ENCODE measurements at regions of chr18 and their contacts with region 1.

Region 1: GRCh38 chr18:51029694-51030536 is at the start of gene SMAD4:
- DNase-seq: peak; percentile 97 to 99 (median 98)
- ATAC-seq: peak; percentile 78
- H3K4me3 ChIP-seq: peak within 1 kb of the TSS; percentile 77
- H3K4me3 Mint-ChIP-seq: peak within 1 kb of the TSS; percentile 100
- H3K27ac ChIP-seq: peak within 1 kb of the TSS; percentile 79 to 82
- H3K27ac Mint-ChIP-seq: peak within 1 kb of the TSS; percentile 100
- H3K4me1 ChIP-seq: peaks cover 35% of the 10 kb centered on the region
- H3K4me1 Mint-ChIP-seq: peaks cover 63% of the 10 kb centered on the region
- H3K27me3 ChIP-seq: no peaks in the 10 kb centered on the region
- H3K27me3 Mint-ChIP-seq: no peaks in the 10 kb centered on the region
- CTCF ChIP-seq: no peak
- total RNA-seq, gene SMAD4: 82.0 to 82.9 TPM

Region 2: GRCh38 chr18:50287441-50288347 is 742.2 kb before region 1 on chr18 and contains the start of gene CXXC1:
- CTCF ChIA-PET with region 1: no interaction called
- POLR2A ChIA-PET with region 1: no interaction called
- intact Hi-C with region 1: loop called (anchors 5 to 10 kb)
- DNase-seq: peak; percentile 96 to 99 (median 97)
- ATAC-seq: peak; percentile 85
- H3K4me3 ChIP-seq: peak within 1 kb of the TSS; percentile 85
- H3K4me3 Mint-ChIP-seq: peak within 1 kb of the TSS; percentile 96
- H3K27ac ChIP-seq: peak within 1 kb of the TSS; percentile 72 to 93
- H3K27ac Mint-ChIP-seq: peak within 1 kb of the TSS; percentile 98
- H3K4me1 ChIP-seq: peaks cover 24% of the 10 kb centered on the region
- H3K4me1 Mint-ChIP-seq: peaks cover 27% of the 10 kb centered on the region
- H3K27me3 ChIP-seq: no peaks in the 10 kb centered on the region
- H3K27me3 Mint-ChIP-seq: no peaks in the 10 kb centered on the region
- CTCF ChIP-seq: peak; percentile 61
- total RNA-seq, gene CXXC1: 120 to 128 TPM

Region 3: DNA sequence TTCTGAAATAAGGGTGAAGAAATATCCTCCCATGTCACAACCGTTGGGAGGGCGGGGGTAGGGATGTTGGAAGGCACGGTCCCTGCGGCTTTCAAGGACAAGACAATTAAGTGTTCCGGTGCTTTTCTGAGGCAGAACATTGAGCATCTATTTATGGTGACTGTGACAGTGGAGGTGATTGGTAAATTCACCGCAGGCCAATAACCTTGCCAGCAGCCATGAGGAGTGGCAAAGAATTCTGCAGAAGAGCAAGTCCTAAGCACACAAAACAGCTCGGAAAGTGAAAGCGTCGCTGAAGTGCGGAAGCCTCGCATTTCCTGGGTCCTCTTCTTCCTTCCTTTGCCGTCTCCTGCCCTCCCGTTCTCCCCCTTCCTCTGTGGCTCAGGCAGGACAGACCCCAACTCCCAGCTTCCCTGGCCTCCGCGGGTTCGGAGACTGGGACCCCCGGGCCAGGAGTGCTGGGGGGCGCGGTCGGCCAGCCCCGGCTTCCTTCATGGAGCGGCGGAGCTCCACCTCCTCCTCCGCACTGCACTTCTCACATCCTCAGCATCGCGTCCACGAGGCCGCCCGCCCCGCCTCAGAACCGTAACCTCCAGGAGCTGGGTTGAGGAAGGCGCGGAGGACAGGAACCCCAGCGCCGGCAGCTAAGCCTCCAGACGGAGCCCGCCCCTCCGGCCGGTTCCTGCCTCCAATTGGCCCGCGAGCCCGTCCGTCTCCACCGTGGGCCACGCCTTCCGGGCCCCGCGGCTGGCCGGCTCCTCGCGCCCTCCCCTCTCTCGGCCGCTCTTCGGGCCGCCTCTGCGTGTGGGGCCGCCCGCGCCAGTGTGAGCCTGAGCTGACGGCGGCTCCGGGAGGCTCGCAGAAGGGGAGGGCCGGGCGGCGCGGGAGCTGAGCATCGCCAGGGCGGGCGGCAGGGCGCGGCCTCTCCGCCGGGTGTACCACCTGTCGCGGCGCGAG is 151.3 kb before region 1 on chr18 and contains the start of gene ME2:
- CTCF ChIA-PET with region 1: no interaction called
- POLR2A ChIA-PET with region 1: interaction called, 107 read pairs
- intact Hi-C with region 1: loop called (anchors 2 to 5 kb)
- DNase-seq: peak; percentile 77 to 94 (median 88)
- ATAC-seq: peak; percentile 90
- H3K4me3 ChIP-seq: peak within 1 kb of the TSS; percentile 93
- H3K4me3 Mint-ChIP-seq: peak within 1 kb of the TSS; percentile 98
- H3K27ac ChIP-seq: peak within 1 kb of the TSS; percentile 95 to 97
- H3K27ac Mint-ChIP-seq: peak within 1 kb of the TSS; percentile 97
- H3K4me1 ChIP-seq: peaks cover 32% of the 10 kb centered on the region
- H3K4me1 Mint-ChIP-seq: peaks cover 28% of the 10 kb centered on the region
- H3K27me3 ChIP-seq: no peaks in the 10 kb centered on the region
- H3K27me3 Mint-ChIP-seq: peaks cover 6% of the 10 kb centered on the region
- CTCF ChIP-seq: no peak
- total RNA-seq, gene ME2: 15.6 to 16.1 TPM

Region 4: DNA sequence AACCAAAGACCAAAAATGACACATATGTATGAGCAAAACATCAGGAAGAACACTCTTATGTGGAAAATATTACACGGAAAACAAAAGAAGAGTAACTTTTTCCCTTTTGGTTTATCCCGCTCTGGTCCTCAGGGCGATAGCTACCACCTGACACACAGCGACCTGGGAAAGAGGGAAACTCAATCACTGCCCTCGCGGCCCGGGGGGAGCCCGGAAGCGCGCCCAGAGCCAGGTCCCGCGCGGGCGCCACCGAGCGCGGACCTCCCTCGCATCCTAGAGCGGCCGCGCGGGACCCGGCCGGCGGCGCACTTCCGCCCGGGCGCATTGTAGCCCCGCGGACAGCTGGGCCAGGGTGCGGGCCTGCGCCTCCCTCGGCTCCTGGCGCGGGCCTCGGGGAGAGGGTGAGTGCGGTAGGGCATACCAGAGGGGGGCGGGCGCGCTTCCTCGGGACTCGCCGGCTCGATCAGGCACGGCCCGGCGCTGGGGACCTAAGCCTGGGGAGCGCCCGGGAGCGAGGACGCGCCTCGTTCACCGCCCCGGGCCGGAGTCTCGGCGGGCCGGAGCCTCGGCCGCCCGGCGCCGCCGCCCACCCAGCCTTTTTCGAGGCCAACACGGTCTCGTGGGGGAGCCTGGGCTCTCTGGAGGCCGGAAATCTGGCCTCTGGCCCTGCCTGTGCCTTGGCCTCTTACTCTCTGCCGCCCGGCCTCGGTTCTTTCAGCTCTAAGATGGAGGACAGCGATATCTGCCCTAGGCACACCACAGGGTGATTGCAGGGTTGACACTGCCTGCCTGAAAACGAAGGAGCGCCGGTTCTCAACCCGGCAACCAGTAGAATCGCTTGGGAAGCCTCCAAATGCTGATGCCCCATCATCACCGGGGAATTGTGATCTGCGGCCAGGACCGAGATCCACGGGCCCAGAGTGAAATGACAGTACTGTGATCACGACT is 61.9 kb before region 1 on chr18 and contains the start of gene ELAC1:
- CTCF ChIA-PET with region 1: interaction called, 3 read pairs
- POLR2A ChIA-PET with region 1: interaction called, 79 read pairs
- intact Hi-C with region 1: loop called in 1 of 2 experiments (anchors 1 kb)
- DNase-seq: peak; percentile 43 to 86 (median 59)
- ATAC-seq: peak; percentile 89
- H3K4me3 ChIP-seq: peak within 1 kb of the TSS; percentile 88
- H3K4me3 Mint-ChIP-seq: peak within 1 kb of the TSS; percentile 96
- H3K27ac ChIP-seq: peak within 1 kb of the TSS; percentile 78 to 85
- H3K27ac Mint-ChIP-seq: peak within 1 kb of the TSS; percentile 83
- H3K4me1 ChIP-seq: peaks cover 9% of the 10 kb centered on the region
- H3K4me1 Mint-ChIP-seq: peaks cover 37% of the 10 kb centered on the region
- H3K27me3 ChIP-seq: no peaks in the 10 kb centered on the region
- H3K27me3 Mint-ChIP-seq: no peaks in the 10 kb centered on the region
- CTCF ChIP-seq: no peak
- total RNA-seq, gene ELAC1: 3.0 to 4.6 TPM

Measured in CD4-positive, alpha-beta T cell (primary cell).